ENCODE measurements at regions of chr10 and their contacts with region 1.

Region 1: GRCh38 chr10:35195361-35196306 is 69.0 kb downstream of the CREM start:
- DNase-seq: peak; percentile 90
- ATAC-seq: peak; percentile 90
- H3K4me3 Mint-ChIP-seq: peak overlapping the region; percentile 85
- H3K27ac Mint-ChIP-seq: peak overlapping the region; percentile 100
- H3K4me1 Mint-ChIP-seq: peaks cover 61% of the 10 kb centered on the region
- H3K27me3 Mint-ChIP-seq: no peaks in the 10 kb centered on the region

Region 2: DNA sequence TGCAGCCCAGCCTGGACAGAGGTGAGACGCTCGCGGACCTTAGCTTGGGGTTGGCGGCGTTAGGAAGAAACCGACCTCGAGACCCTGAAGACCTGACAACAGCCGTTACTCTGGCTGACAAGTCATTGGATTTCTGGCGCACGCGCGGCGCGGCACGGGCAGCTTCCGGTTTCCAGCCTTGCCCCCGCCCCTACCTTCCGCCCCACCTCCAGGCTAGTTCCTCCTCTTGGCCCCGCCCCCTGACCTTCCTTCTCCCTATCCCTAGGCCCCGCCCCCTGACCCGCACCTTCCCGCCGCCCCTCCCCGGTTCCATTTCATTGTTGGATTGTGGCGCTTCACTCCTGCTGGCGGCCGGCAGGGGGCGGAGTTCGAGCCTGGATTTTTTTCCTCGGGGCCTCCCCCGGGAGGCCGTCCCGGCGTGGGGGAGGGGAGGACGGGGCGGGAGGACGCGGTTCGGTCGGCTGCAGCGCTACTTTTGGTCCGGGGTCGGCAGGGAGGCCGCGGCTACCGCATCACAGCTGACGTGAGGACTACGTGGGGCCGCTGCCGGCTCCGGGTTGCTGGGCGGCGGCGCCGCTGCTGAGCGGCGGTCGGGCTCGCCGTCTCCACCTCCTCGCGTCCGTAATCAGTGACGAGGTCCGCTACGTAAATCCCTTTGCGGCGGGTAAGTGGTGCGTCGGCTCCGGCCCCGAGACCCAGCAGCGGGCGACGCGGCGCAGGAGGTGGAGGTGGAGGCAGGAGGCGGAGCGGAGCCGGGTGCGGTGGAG is 68.9 kb before region 1 on chr10 and contains the start of gene CREM:
- CTCF ChIA-PET with region 1: interaction called, 323 read pairs
- POLR2A ChIA-PET with region 1: interaction called, 201 read pairs
- DNase-seq: peak; percentile 100
- ATAC-seq: peak; percentile 82
- H3K4me3 Mint-ChIP-seq: peak within 1 kb of the TSS; percentile 86
- H3K27ac Mint-ChIP-seq: peak within 1 kb of the TSS; percentile 93
- H3K4me1 Mint-ChIP-seq: peaks cover 53% of the 10 kb centered on the region
- H3K27me3 Mint-ChIP-seq: no peaks in the 10 kb centered on the region
- total RNA-seq, gene CREM: 78.3 to 84.1 TPM

Region 3: GRCh38 chr10:35153716-35154479 is 41.7 kb before region 1 on chr10:
- CTCF ChIA-PET with region 1: interaction called, 47 read pairs
- POLR2A ChIA-PET with region 1: interaction called, 42 read pairs
- DNase-seq: no peak
- ATAC-seq: no peak
- H3K4me3 Mint-ChIP-seq: no peak overlapping the region
- H3K27ac Mint-ChIP-seq: peak overlapping the region; percentile 24
- H3K4me1 Mint-ChIP-seq: peaks cover 46% of the 10 kb centered on the region
- H3K27me3 Mint-ChIP-seq: no peaks in the 10 kb centered on the region

Region 4: DNA sequence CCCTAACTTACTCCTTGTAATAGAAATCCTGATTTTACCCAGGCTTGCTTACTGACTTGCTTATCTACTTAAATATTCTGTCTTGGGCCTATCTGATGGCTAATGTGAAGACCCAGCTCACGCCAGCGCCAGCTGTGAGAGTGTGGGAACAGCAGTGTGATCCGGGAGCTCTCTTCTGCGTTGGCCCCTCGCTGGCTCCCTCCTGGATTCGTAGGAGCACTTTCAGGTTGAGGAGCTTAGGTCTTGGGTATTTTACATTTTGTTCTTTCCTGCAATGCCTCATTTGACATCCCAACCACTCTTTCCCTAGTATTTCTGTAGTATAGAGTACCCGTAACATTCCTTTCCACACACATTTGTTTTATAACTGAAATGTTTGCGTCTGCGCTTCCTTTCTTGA is 17.3 kb before region 1 on chr10:
- CTCF ChIA-PET with region 1: interaction called, 17 read pairs
- POLR2A ChIA-PET with region 1: interaction called, 5 read pairs
- DNase-seq: no peak
- ATAC-seq: no peak
- H3K4me3 Mint-ChIP-seq: no peak overlapping the region
- H3K27ac Mint-ChIP-seq: no peak overlapping the region
- H3K4me1 Mint-ChIP-seq: peaks cover 6% of the 10 kb centered on the region
- H3K27me3 Mint-ChIP-seq: no peaks in the 10 kb centered on the region

Region 5: DNA sequence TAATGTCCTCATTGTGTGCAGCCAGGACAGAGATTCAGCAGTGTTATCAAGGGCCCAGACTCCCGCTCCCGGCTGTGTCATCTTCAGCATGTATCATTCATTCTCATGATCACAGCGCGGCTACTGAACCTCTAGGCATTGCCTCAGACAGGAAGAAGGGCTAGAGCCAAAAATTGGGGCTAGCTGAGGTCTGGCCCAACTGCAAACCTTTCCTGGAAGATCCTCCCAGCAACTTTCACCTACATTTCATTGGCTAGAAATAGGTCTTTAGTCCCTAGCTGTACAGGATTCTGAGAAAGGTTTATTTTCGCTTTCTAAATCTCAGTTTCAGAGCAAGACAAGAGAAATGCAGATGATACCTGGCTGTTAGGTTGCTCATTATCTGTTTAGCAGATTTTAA is 12.9 kb after region 1 on chr10:
- CTCF ChIA-PET with region 1: interaction called, 147 read pairs
- POLR2A ChIA-PET with region 1: interaction called, 48 read pairs
- DNase-seq: peak; percentile 82
- ATAC-seq: peak; percentile 91
- H3K4me3 Mint-ChIP-seq: peak overlapping the region; percentile 74
- H3K27ac Mint-ChIP-seq: peak overlapping the region; percentile 97
- H3K4me1 Mint-ChIP-seq: peaks cover 78% of the 10 kb centered on the region
- H3K27me3 Mint-ChIP-seq: no peaks in the 10 kb centered on the region